Heart right ventricle (tissue), 16 donors: ENCODE measurements at regions of chr16 and their contacts with region 1.

Region 1: GRCh38 chr16:53952215-53953208 is 248.6 kb downstream of the FTO start:
- DNase-seq: no peak
- ATAC-seq: peak in 5 of 8 donors; percentile 25 to 68 (median 53)
- H3K4me3 ChIP-seq: peak overlapping the region in 2 of 10 donors; percentile 5 to 11
- H3K27ac ChIP-seq: peak overlapping the region in 1 of 10 donors; percentile 31
- H3K4me1 ChIP-seq: peaks cover 0 to 27% (median 12%) of the 10 kb centered on the region in 9 donors
- H3K27me3 ChIP-seq: no peaks in the 10 kb centered on the region
- CTCF ChIP-seq: no peak

Region 2: DNA sequence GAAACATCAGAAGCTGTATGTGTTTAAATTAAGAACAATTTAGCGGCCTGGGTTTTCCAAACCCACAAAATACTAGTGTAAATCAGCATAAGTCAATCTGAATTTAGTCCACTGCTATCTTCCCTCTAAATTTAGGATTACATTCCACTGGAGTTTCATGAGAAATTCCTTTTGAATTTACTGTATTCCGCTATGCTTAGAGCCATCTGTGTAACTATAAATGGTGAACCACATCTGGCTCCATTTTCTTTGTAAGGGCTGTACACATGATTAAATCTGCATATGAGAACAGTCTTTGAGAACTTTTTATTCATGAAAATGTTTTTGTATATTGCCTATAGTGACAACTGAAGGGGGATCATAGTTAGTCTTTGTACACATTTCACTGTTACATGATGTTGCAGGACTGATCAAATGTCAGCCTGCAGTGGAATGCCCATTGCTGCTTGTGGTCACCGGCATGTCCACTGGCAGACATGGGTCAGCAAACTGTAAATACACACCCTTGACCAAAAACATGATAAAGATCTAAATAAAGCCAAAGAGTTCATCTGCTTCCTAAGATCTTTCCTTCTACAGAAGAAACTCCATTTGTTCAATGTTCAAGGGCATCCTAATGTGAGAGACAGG is 285.6 kb before region 1 on chr16:
- intact Hi-C with region 1: no loop called
- DNase-seq: no peak
- ATAC-seq: no peak
- H3K4me3 ChIP-seq: no peak overlapping the region
- H3K27ac ChIP-seq: no peak overlapping the region
- H3K4me1 ChIP-seq: peaks cover 0 to 13% (median 0%) of the 10 kb centered on the region in 9 donors
- H3K27me3 ChIP-seq: no peaks in the 10 kb centered on the region
- CTCF ChIP-seq: no peak

Region 3: DNA sequence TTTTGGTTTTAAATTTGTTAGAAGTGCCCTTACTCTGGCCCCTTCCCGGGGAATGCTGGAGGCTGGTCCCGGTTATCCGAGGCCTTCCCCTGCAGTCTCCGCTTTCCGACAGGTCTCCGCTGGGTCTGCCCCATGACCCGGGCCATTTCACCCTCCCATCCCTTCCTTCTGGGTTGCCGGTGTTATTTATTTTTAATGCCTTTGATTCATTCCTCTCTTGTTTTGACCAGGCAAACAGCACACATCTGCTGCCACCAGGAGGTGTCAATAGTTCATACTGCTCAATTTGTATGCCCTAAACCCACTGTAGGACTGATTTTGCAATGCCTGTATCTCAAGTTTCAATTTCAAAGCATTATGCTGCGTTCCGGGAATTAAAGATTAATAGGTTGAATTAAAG is 864.9 kb after region 1 on chr16:
- intact Hi-C with region 1: loop called in 1 of 10 experiments (anchors 10 kb)
- DNase-seq: peak in 1 of 2 donors; percentile 7
- ATAC-seq: peak; percentile 41 to 72 (median 54)
- H3K4me3 ChIP-seq: no peak overlapping the region
- H3K27ac ChIP-seq: no peak overlapping the region
- H3K4me1 ChIP-seq: no peaks in the 10 kb centered on the region
- H3K27me3 ChIP-seq: no peaks in the 10 kb centered on the region
- CTCF ChIP-seq: peak in 7 of 9 donors; percentile 22 to 57 (median 44)